Kidney (tissue), 22 donors: ENCODE measurements at regions of chr1 and their contacts with region 1.

Region 1: DNA sequence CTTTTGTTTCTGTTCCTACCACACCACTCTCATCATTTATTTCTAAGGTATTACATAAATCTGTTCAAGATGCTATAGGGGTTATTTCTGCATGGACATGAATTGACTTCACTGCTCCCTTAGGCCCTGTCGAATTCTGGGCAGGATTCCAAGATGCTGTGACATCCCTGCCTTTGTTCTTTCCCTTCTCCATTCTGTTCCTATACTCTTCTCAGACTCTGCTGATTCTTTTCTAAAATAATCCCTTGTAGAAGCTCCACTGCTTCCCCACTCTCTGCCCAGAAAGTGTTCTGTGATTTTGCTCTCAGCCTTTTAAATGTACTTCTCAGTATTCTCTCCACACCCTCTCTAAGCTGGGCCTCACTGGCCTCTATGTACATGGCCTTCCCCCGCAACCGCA is 99.2 kb downstream of the PHTF1 start:
- DNase-seq: no peak
- H3K4me3 ChIP-seq: no peak overlapping the region
- H3K27ac ChIP-seq: no peak overlapping the region
- H3K4me1 ChIP-seq: peaks cover 0 to 3% (median 0%) of the 10 kb centered on the region in 3 donors
- H3K27me3 ChIP-seq: no peaks in the 10 kb centered on the region
- CTCF ChIP-seq: no peak

Region 2: DNA sequence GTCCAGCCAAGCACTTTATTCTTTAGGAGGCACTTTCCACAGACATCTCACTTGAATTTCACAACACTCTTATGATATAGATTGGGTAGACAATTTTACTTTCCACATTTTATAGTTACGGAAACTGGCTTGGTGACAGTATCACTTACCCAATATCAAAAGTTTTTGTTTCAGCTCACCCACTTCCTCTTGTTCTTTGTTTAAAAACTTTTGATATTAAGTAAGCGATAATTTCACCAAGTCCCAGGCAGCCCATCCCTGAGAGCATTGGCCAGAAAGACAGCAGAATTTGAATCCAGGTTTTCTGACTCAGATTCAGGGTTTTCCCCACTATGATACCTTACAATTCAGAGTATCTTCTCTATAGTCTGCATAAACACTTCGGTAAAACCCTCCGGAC is 527.0 kb before region 1 on chr1:
- intact Hi-C with region 1: loop called (anchors 10 kb)
- DNase-seq: no peak
- H3K4me3 ChIP-seq: no peak overlapping the region
- H3K27ac ChIP-seq: no peak overlapping the region
- H3K4me1 ChIP-seq: no peaks in the 10 kb centered on the region
- H3K27me3 ChIP-seq: no peaks in the 10 kb centered on the region
- CTCF ChIP-seq: no peak

Region 3: GRCh38 chr1:113593550-113594297 is 66.4 kb before region 1 on chr1:
- intact Hi-C with region 1: no loop called
- DNase-seq: no peak
- H3K4me3 ChIP-seq: no peak overlapping the region
- H3K27ac ChIP-seq: no peak overlapping the region
- H3K4me1 ChIP-seq: no peaks in the 10 kb centered on the region
- H3K27me3 ChIP-seq: no peaks in the 10 kb centered on the region
- CTCF ChIP-seq: no peak